ENCODE measurements at regions of chr20 and their contacts with region 1.

Region 1: GRCh38 chr20:8389381-8390036 is 257.4 kb downstream of the PLCB1 start:
- DNase-seq: no peak
- ATAC-seq: peak; percentile 55

Region 2: DNA sequence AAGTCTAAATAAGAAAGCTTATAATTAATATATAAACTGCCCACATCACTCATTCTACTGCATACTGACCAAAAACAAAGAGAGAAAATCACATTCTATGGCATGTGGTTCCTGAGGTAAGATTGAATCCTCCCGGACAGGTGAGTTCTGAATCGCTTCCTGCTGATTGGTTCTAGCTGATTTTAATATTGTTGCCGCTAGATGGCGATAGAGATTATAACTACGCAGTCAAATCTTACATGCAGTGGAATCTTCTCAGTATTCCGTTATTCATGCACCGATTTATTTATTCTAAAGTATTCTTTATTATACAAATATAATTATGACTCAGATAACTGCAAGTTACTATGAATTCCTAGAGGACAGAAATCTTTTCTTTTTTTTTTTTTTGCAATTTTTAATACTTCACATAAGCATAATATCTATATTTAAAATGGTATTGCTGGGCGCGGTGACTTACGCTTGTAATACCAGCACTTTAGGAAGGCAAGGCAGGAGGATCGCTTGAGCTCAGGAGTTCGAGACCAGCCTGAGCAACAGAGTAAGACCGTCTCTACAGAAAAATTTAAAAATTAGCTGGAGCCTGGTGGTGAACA is 345.7 kb before region 1 on chr20:
- intact Hi-C with region 1: loop called (anchors 10 kb)
- DNase-seq: no peak
- ATAC-seq: peak; percentile 59

Region 3: GRCh38 chr20:8131598-8132483 is 257.7 kb before region 1 on chr20 and contains the start of gene PLCB1:
- intact Hi-C with region 1: loop called (anchors 10 kb)
- DNase-seq: peak; percentile 91
- ATAC-seq: peak; percentile 92
- total RNA-seq, gene PLCB1: 7.7 TPM

Region 4: DNA sequence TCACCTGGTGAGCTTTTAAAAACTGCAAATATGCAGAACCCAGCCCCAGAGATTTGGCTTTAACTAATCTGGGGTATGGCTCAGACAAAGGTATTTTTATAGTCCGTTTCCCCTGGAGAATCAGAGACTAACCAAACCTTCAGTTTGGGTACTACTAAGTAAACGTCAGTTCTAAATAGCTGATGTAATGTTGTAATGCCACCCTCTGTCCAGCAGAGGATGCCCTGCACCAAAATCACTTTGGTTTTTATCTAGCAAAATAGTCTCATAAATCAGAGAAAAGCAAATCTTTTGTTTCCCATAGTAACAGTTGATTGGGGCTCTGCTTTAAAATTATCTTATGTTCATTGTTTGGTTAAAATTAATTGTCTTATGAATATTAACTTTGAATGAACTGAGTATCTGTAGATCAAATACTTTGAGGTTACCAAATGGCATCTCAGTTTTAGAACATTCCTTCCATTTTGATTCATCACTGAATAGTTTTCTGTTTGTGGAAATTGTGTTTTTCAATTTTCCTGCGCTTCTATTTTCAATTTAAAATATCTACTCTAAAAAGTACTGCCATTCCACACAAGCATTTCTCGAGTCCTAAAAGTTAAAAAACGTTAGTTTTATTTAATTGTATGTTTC is 401.0 kb after region 1 on chr20:
- intact Hi-C with region 1: no loop called
- DNase-seq: no peak
- ATAC-seq: peak; percentile 31

Measured in left ventricle myocardium superior (tissue), 1 donor.